ENCODE measurements at regions of chr3 and their contacts with region 1.

Region 1: DNA sequence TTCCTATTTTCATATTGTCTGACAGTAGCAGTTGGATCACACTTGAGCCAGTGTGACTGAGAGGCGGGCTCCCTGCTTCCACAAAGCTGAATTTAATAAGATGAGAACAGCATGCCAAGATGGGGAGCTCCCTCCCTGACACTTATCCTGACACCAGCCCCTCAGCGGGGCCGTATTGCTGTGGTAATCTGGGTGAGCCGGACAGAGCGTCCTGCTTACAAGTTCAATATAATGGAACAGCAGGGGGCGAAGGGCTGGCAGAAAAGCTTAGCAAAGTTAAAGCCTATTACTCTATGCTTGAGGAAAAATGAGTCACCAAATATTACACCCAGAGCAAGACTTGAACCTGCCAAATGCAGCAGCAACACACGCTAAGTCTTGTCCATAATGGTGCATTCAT is 163.8 kb upstream of the CMC1 start:
- DNase-seq: no peak
- ATAC-seq: no peak
- H3K4me3 ChIP-seq: no peak overlapping the region
- H3K27ac ChIP-seq: no peak overlapping the region
- H3K4me1 ChIP-seq: no peaks in the 10 kb centered on the region
- H3K27me3 ChIP-seq: no peaks in the 10 kb centered on the region
- CTCF ChIP-seq: no peak
- EP300 ChIP-seq: no peak
- POLR2A ChIP-seq: no peak
- RAD21 ChIP-seq: no peak

Region 2: GRCh38 chr3:27521179-27521871 is 556.2 kb before region 1 on chr3:
- CTCF ChIA-PET with region 1: no interaction called
- POLR2A ChIA-PET with region 1: no interaction called
- RAD21 ChIA-PET with region 1: no interaction called
- SMC1A ChIA-PET with region 1: no interaction called
- in situ Hi-C with region 1: no loop called
- intact Hi-C with region 1: no loop called
- DNase-seq: no peak
- ATAC-seq: no peak
- H3K4me3 ChIP-seq: no peak overlapping the region
- H3K27ac ChIP-seq: no peak overlapping the region
- H3K4me1 ChIP-seq: no peaks in the 10 kb centered on the region
- H3K27me3 ChIP-seq: no peaks in the 10 kb centered on the region
- CTCF ChIP-seq: no peak
- EP300 ChIP-seq: no peak
- POLR2A ChIP-seq: no peak
- RAD21 ChIP-seq: no peak

Region 3: DNA sequence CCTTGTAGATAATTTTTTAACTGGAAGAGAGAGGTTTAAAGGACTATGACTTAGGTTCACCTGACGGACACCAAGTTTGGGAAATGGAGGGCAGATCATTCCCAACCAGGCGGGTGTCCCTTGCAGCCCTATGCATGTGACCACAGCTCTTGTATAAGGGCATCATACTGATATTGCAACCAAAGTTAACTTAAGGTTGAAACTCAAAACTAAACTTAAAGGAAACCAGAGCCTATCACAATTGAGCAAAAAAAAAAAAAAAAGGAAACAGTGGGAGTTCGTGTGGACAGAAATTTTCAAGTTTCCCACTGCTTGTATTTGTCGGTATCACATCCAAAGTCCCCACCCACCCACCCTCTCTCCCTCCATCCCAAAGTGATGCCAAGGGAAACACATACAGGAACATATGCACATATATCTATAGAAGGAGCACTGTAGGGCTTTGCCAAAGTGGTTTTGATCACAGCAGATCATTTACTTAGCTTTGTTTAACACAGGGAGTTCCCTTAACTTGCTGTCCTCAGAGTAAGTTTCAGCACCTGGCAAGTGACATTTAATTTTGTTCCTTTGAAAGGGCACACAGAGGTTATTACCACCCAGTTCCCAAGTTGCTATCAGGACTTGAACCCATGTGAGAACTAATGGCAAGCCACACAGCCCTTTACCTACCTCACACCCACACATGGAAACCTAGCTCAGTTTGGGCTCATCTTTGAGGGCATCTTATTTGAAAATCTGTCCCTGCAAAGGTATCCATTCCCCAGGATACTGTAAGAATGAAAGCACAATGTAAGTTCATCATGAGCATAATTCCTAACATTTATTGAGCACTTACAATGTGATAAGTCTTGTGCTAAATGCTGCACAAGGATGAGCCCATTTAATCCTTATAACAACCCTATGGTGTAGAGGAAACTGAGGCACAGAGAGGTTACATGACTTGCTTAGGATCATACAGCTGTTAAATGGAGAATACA is 40.7 kb before region 1 on chr3:
- CTCF ChIA-PET with region 1: interaction called, 3 read pairs
- POLR2A ChIA-PET with region 1: interaction called, 11 read pairs
- RAD21 ChIA-PET with region 1: interaction called, 24 read pairs
- SMC1A ChIA-PET with region 1: interaction called, 85 read pairs
- in situ Hi-C with region 1: no loop called
- intact Hi-C with region 1: loop called (anchors 2 kb)
- DNase-seq: no peak
- ATAC-seq: peak; percentile 83
- H3K4me3 ChIP-seq: no peak overlapping the region
- H3K27ac ChIP-seq: no peak overlapping the region
- H3K4me1 ChIP-seq: no peaks in the 10 kb centered on the region
- H3K27me3 ChIP-seq: no peaks in the 10 kb centered on the region
- CTCF ChIP-seq: no peak
- EP300 ChIP-seq: peak in 1 of 2 experiments; percentile 34; a peak in 1 of 4 replicates
- POLR2A ChIP-seq: no peak
- RAD21 ChIP-seq: no peak

Region 4: GRCh38 chr3:28050895-28051294 is 26.7 kb before region 1 on chr3:
- CTCF ChIA-PET with region 1: interaction called, 20 read pairs
- POLR2A ChIA-PET with region 1: interaction called, 6 read pairs
- RAD21 ChIA-PET with region 1: interaction called, 10 read pairs
- SMC1A ChIA-PET with region 1: interaction called, 77 read pairs
- in situ Hi-C with region 1: no loop called
- intact Hi-C with region 1: no loop called
- DNase-seq: no peak
- ATAC-seq: peak; percentile 70
- H3K4me3 ChIP-seq: no peak overlapping the region
- H3K27ac ChIP-seq: no peak overlapping the region
- H3K4me1 ChIP-seq: no peaks in the 10 kb centered on the region
- H3K27me3 ChIP-seq: no peaks in the 10 kb centered on the region
- CTCF ChIP-seq: no peak
- EP300 ChIP-seq: 0 out of 4 replicates have a peak, but pooled peaks of 1 of the 2 experiments have one; percentile 6
- POLR2A ChIP-seq: no peak
- RAD21 ChIP-seq: no peak

Region 5: DNA sequence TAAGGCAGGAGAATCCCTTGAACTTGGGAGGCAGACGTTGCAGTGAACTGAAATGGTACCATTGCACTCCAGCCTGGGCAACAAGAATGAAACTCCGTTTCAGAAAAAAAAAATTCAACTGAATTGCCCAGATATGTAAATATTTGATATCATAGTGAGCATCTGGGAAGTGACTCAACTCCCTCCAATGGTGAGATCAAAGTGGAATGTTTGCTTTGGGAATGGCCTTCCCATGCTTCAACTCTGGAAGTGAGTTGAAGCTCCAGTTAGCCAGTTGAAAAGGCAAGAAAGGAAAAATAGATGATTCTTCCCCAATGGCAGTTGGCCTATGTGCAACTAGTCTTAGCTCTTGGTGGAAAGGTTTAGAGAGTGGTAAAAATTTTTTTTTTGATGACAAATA is 32.3 kb after region 1 on chr3:
- CTCF ChIA-PET with region 1: interaction called, 3 read pairs
- POLR2A ChIA-PET with region 1: no interaction called
- RAD21 ChIA-PET with region 1: interaction called, 3 read pairs
- SMC1A ChIA-PET with region 1: interaction called, 48 read pairs
- in situ Hi-C with region 1: no loop called
- intact Hi-C with region 1: no loop called
- DNase-seq: no peak
- ATAC-seq: no peak
- H3K4me3 ChIP-seq: no peak overlapping the region
- H3K27ac ChIP-seq: no peak overlapping the region
- H3K4me1 ChIP-seq: no peaks in the 10 kb centered on the region
- H3K27me3 ChIP-seq: no peaks in the 10 kb centered on the region
- CTCF ChIP-seq: no peak
- EP300 ChIP-seq: no peak
- POLR2A ChIP-seq: no peak
- RAD21 ChIP-seq: no peak

Region 6: DNA sequence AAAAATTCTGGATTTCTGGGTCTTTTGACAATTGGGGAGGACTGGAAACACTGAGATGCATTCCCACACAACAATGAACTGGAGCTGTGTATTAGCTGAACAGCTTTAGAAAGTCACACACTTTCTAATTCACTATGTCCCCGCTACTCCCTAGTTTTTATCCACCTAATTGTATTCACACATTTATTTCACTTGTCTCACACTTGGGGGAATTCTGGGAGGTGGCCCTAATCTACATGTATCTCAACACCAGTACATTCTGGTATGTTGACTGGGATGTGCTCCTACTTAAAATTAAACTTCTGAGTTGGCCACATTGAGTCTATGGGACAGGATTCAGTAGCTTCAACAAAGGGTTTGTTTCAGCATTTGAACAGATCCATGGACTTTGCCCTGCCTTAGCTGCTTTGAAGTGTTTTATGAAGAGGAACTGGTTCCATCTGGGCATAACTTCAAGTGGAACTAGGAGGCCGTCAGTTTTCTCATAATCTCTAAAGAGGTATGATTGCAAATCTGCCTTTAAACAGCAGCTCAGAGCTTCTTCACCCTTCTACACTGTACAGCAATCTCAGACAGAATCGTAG is 57.3 kb after region 1 on chr3:
- CTCF ChIA-PET with region 1: interaction called, 8 read pairs
- POLR2A ChIA-PET with region 1: interaction called, 11 read pairs
- RAD21 ChIA-PET with region 1: interaction called, 42 read pairs
- SMC1A ChIA-PET with region 1: interaction called, 92 read pairs
- in situ Hi-C with region 1: no loop called
- intact Hi-C with region 1: no loop called
- DNase-seq: no peak
- ATAC-seq: peak; percentile 16
- H3K4me3 ChIP-seq: no peak overlapping the region
- H3K27ac ChIP-seq: no peak overlapping the region
- H3K4me1 ChIP-seq: no peaks in the 10 kb centered on the region
- H3K27me3 ChIP-seq: no peaks in the 10 kb centered on the region
- CTCF ChIP-seq: no peak
- EP300 ChIP-seq: no peak
- POLR2A ChIP-seq: no peak
- RAD21 ChIP-seq: no peak

Region 7: DNA sequence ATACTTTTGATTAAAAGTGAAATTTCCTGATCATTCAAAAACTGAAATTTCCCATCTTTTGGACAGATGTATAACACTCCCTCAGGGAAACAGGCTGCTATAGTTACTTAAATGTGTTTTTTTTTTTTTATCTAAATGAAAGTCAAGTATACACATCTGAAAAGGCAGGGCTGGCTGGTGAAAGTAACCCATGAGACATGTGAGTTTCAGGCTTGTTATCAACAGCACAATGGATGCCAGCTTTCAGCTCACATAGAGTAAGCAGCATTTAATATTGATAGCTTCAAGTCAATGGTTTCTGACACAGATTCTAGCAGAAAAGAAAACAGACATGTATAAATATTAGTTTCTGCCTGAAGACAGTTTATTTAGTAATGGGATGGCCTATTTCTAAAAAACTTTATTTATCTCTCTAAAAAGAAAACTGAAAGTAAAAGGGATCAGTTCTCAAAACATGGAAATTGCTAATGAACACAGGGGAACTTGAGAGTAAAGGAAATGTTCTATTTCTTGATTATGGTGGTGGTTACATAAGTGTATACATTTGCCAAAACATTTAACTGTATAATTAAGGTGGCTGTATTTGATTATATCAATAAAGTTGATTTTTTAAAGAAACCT is 74.1 kb after region 1 on chr3:
- CTCF ChIA-PET with region 1: no interaction called
- POLR2A ChIA-PET with region 1: interaction called, 3 read pairs
- RAD21 ChIA-PET with region 1: no interaction called
- SMC1A ChIA-PET with region 1: interaction called, 13 read pairs
- in situ Hi-C with region 1: no loop called
- intact Hi-C with region 1: no loop called
- DNase-seq: peak; percentile 33
- ATAC-seq: peak; percentile 95
- H3K4me3 ChIP-seq: no peak overlapping the region
- H3K27ac ChIP-seq: no peak overlapping the region
- H3K4me1 ChIP-seq: no peaks in the 10 kb centered on the region
- H3K27me3 ChIP-seq: no peaks in the 10 kb centered on the region
- CTCF ChIP-seq: no peak
- EP300 ChIP-seq: no peak
- POLR2A ChIP-seq: no peak
- RAD21 ChIP-seq: no peak

Region 8: GRCh38 chr3:28198161-28198560 is 120.6 kb after region 1 on chr3:
- CTCF ChIA-PET with region 1: no interaction called
- POLR2A ChIA-PET with region 1: no interaction called
- RAD21 ChIA-PET with region 1: no interaction called
- SMC1A ChIA-PET with region 1: no interaction called
- in situ Hi-C with region 1: no loop called
- intact Hi-C with region 1: no loop called
- DNase-seq: no peak
- ATAC-seq: no peak
- H3K4me3 ChIP-seq: no peak overlapping the region
- H3K27ac ChIP-seq: no peak overlapping the region
- H3K4me1 ChIP-seq: no peaks in the 10 kb centered on the region
- H3K27me3 ChIP-seq: no peaks in the 10 kb centered on the region
- CTCF ChIP-seq: no peak
- EP300 ChIP-seq: no peak
- POLR2A ChIP-seq: no peak
- RAD21 ChIP-seq: no peak

Region 9: DNA sequence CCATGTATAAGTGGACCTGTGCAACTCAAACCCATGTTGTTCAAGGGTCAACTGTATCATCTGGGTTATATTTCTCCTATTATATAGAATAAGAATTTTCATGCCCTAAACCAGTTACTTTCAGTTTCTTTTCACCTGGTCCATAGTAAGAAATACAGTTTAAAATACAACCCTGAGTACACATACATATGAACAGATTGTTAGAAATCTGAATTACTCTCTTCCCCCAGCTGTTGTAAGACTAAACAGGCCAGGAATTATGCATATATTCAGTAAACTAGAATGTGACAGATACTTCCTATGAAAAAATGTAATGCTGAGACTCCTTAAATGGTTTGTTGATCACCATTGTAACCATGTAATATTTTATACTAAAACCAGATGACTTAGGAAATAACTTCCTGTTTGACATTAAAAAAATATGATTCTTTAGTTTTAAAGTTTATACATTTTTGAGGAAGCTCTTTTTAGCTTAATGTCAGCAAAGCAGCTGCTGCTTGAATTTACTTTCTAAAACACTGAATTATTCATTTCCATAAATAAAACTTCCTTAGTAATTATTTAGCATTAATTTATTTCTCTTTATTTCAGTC is 218.4 kb after region 1 on chr3:
- CTCF ChIA-PET with region 1: no interaction called
- POLR2A ChIA-PET with region 1: no interaction called
- RAD21 ChIA-PET with region 1: no interaction called
- SMC1A ChIA-PET with region 1: no interaction called
- in situ Hi-C with region 1: no loop called
- intact Hi-C with region 1: no loop called
- DNase-seq: no peak
- ATAC-seq: peak; percentile 62
- H3K4me3 ChIP-seq: no peak overlapping the region
- H3K27ac ChIP-seq: no peak overlapping the region; the same call in 1 of the 2 replicates
- H3K4me1 ChIP-seq: no peaks in the 10 kb centered on the region
- H3K27me3 ChIP-seq: no peaks in the 10 kb centered on the region
- CTCF ChIP-seq: no peak
- EP300 ChIP-seq: no peak
- POLR2A ChIP-seq: no peak
- RAD21 ChIP-seq: no peak